ENCODE measurements at regions of chr12 and their contacts with region 1.

Region 1: DNA sequence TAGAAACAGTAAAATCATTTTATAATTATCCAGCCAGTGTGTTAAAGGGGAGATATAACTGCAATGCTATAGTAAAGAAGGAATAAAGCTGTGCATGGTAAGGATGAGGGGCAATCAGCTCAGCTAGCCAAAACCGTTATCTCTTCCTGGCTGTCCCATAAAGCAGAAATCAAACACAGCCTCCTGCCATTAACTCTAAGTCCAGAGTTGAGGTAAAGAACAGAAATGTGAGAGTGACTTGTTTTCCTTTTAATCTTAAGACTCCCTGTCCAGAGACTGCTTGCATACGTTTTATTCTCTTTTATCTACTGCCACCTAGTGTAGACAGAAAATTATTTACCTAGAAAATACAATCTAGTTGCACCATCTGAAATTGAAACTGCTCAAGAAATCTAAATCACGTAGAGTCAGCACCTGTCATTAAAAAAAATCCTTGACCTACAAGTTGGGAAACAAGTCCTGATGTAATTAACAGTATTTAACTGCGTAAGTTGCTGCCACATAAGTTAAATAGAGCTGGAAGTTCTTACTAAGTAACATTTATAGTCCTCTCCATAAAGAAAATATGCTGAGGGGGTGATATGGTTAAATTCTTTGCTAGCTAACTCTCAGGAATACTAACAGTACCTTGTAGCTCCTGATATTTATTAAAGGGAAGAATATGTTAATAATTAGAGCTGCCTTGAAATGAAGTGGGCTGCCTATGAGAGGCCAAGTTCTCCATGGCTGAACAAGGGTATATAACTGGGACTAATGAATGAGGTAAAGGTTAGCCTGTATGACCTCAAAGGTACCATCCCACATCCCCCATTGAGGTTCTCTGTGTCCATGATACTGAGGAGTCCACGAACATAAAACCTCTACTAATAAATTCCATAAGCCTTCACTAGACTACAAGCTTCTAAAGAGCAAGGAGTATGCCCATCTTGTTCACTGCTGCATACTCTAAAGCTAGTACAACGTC is 62.7 kb downstream of the GALNT4 start:
- DNase-seq: no peak
- H3K4me3 ChIP-seq: no peak overlapping the region
- H3K27ac ChIP-seq: no peak overlapping the region
- H3K4me1 ChIP-seq: peaks cover 2% of the 10 kb centered on the region
- H3K27me3 ChIP-seq: no peaks in the 10 kb centered on the region
- CTCF ChIP-seq: peak; percentile 24 to 71 (median 31)
- EP300 ChIP-seq: no peak
- POLR2A ChIP-seq: no peak

Region 2: DNA sequence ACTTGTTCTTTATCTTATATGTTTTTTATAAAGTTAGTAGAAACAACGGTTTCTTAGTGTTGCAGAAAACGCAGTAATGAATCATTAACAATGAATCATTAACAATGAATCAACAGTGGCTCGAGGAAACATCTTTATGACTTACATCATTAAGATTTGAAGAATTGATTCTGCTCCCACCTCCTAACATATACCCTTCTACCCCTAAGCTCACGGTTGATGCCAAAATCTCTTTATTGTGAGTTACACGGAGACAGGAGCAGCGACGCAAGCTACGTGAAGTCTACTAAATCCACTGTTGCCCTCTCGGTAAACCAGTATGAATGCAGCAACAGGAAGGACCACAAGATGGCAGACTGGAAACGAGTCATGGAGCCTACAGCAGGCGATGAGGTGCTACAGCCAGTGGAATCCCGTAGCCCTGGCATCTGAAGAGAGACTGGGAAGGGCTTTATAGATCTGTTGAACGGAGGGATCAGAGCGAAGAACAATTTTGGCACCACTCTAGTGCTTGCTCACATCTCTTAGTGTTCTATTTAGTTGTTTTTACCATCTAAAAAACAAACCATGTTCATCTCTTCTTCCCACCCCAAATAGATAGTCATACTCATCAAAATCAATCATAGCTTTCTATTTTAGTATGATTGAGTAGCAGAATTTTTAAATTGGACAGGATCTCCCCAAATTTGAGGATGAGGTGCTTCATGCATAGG is 442.4 kb before region 1 on chr12:
- intact Hi-C with region 1: loop called (anchors 5 to 10 kb)
- DNase-seq: peak; percentile 52 to 82 (median 62)
- H3K4me3 ChIP-seq: peak overlapping the region; percentile 8
- H3K27ac ChIP-seq: no peak overlapping the region
- H3K4me1 ChIP-seq: peaks cover 3% of the 10 kb centered on the region
- H3K27me3 ChIP-seq: no peaks in the 10 kb centered on the region
- CTCF ChIP-seq: peak; percentile 39 to 63 (median 56)
- EP300 ChIP-seq: no peak
- POLR2A ChIP-seq: no peak

Region 3: DNA sequence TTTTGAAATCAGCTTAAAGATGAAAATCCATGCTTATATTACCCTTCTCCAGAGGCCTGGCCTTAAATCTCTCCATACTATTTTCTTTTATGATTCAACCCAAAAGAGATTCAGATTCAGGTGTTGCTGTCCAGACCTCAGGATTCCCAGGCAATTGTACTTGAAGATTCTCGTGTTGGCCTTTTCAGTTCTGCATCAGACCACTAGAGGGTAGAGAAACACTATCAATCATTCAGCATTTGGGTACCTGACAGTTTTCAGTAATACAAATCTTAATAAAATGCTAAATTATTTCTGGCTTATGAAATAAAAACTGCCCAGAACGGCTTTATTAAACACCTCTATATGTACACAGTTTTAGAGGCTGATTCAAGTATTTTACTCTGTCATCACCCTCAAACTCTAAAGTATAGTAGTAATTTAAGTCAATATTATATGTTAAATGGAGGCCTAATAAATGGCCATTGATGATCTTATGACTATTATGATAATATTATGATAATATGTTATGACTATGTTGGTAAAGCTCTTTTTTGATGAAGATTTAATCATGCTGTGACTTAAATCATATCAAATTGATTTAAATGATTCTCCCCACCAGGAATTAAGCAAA is 410.8 kb before region 1 on chr12:
- intact Hi-C with region 1: loop called in 2 of 4 experiments (anchors 5 to 10 kb)
- DNase-seq: no peak
- H3K4me3 ChIP-seq: no peak overlapping the region
- H3K27ac ChIP-seq: no peak overlapping the region
- H3K4me1 ChIP-seq: no peaks in the 10 kb centered on the region
- H3K27me3 ChIP-seq: no peaks in the 10 kb centered on the region
- CTCF ChIP-seq: peak; percentile 6 to 72 (median 49)
- EP300 ChIP-seq: no peak
- POLR2A ChIP-seq: no peak

Region 4: DNA sequence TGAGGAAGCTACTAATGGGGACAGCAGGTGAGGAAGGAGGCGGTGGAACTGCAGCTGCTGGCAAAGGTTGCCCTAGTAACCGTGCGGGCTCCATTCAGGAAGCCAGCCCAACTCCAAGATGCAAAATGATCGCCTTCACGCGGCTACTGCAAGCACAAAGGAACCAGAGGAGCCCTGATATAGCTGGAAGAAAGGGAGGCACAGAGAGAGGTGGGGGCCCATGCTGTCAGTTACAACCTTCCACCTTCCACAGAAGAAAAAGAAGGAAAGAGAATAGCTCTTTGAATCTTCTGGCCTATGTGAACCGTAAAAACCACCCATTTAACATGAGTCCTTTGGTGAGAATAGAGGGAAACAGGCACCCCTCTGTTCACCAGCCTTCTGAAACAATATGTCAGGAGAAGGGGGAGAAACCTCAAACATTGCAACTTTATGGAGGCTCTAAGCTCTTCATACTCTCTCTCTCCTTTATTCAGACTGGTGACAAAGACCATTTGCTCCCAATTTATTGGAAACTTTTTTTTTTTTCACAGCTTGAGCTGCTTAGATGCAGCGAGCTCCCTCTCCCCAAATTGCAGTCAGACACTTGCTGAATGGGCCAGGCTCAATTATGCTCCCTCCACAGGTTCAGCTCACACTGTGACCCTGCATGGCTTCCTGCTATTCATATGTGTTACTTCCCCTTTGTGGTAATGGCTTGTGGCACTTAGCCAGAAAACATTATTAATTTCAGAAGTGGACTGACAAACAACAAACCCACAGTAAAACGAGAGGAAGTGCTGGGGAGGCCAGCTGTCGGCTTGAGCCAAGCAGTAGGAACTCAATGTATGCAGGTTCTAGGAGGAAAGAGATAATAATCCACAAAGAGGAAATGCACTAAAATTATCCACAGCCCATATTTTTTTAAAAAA is 115.8 kb before region 1 on chr12:
- intact Hi-C with region 1: loop called in 1 of 4 experiments (anchors 10 kb)
- DNase-seq: no peak
- H3K4me3 ChIP-seq: no peak overlapping the region
- H3K27ac ChIP-seq: no peak overlapping the region
- H3K4me1 ChIP-seq: peaks cover 3% of the 10 kb centered on the region
- H3K27me3 ChIP-seq: no peaks in the 10 kb centered on the region
- CTCF ChIP-seq: no peak
- EP300 ChIP-seq: no peak
- POLR2A ChIP-seq: no peak